ENCODE measurements at regions of chr1 and their contacts with region 1.

Region 1: DNA sequence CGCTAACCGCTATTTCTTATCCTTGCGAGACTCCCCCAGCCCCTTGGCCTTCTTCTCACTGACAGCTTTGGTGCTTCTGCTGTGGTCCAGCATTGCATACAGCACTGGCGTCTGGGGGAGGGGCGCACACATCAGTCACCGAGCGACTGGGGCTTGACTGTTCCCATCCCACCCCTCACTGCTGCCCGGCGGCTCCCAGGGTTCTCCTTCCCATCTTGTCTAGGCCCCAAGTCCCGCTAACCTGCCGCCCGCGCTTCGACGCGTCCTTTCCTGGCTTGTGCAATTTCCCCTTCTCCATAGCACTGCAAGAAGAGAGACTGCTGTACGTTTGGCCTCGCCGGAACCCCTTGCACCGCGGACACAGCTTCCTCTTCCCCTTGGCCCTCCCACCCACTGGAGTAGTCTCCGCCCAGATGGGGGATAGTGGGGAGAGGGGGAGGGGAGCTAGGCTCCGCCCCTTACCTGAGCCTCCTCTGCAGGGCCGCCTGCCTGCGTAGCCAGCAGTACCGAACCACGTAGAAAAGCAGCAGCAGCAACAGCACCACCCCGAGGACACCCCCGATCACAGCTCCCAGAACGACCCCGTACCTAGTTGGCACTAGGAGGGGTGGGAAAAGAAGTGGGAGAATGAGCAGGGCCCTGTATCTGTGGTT is 3.8 kb downstream of the MPZ start:
- DNase-seq: peak; percentile 42
- H3K4me3 ChIP-seq: peak overlapping the region; percentile 51 to 85 (median 76)
- H3K27ac ChIP-seq: no peak overlapping the region
- H3K4me1 ChIP-seq: peaks cover 11% of the 10 kb centered on the region
- H3K27me3 ChIP-seq: no peaks in the 10 kb centered on the region
- CTCF ChIP-seq: peak; percentile 21 to 54

Region 2: DNA sequence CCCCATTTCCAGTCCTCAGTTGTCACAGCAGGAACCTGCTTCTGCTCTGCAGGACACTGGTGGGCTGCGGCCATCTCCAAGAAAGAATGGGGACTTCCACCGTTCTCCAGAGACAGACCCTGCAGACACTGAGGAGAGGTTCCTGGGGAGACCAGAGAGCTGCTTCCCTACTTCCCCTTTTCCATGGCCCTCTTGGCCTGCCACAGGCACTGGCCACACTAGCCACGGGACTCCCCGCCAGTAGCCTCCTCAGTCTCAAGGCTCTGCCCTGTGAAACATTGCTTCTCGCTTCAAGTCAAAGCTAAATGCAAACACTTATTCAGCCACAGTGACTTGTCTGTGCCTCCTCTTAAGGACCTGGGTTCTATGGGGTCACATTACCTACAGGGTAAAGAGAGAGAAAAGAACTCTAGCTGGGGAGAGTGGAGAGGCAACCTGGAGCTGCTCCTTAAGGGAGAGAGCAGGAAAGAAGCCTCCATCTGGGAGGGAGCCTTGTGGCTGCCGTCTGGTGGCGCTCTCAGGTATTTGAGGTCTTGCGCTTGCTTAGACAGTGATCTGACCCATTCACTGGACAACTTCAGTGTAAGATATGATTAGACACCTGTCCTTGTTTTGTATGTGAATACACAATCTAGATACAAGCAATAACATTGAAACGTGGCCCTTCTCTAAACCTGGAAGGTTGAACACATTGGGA is 1484.7 kb before region 1 on chr1:
- CTCF ChIA-PET with region 1: no interaction called
- dilution Hi-C with region 1: no loop called
- in situ Hi-C with region 1: no loop called
- intact Hi-C with region 1: no loop called
- DNase-seq: no peak
- H3K4me3 ChIP-seq: no peak overlapping the region
- H3K27ac ChIP-seq: no peak overlapping the region
- H3K4me1 ChIP-seq: no peaks in the 10 kb centered on the region
- H3K27me3 ChIP-seq: peaks cover 2% of the 10 kb centered on the region
- CTCF ChIP-seq: no peak

Region 3: GRCh38 chr1:161350671-161351070 is 44.7 kb after region 1 on chr1:
- CTCF ChIA-PET with region 1: no interaction called
- dilution Hi-C with region 1: no loop called
- in situ Hi-C with region 1: no loop called
- intact Hi-C with region 1: no loop called
- DNase-seq: no peak
- H3K4me3 ChIP-seq: no peak overlapping the region
- H3K27ac ChIP-seq: no peak overlapping the region
- H3K4me1 ChIP-seq: no peaks in the 10 kb centered on the region
- H3K27me3 ChIP-seq: no peaks in the 10 kb centered on the region
- CTCF ChIP-seq: no peak

Region 4: GRCh38 chr1:161374373-161374772 is 68.4 kb after region 1 on chr1:
- CTCF ChIA-PET with region 1: no interaction called
- dilution Hi-C with region 1: loop called (anchors 5 kb)
- in situ Hi-C with region 1: no loop called
- intact Hi-C with region 1: no loop called
- DNase-seq: no peak
- H3K4me3 ChIP-seq: no peak overlapping the region
- H3K27ac ChIP-seq: no peak overlapping the region
- H3K4me1 ChIP-seq: no peaks in the 10 kb centered on the region
- H3K27me3 ChIP-seq: no peaks in the 10 kb centered on the region
- CTCF ChIP-seq: no peak

Measured in mammary epithelial cell (primary cell).